Heart right ventricle (tissue), 16 donors: ENCODE measurements at regions of chr1 and their contacts with region 1.

Region 1: GRCh38 chr1:160098852-160099561 is 588 bp upstream of the IGSF8 start:
- DNase-seq: peak; percentile 98 to 99
- ATAC-seq: peak; percentile 89 to 94 (median 92)
- H3K4me3 ChIP-seq: peak overlapping the region in 9 of 10 donors; percentile 70 to 95 (median 81)
- H3K27ac ChIP-seq: peak overlapping the region; percentile 20 to 97 (median 92)
- H3K4me1 ChIP-seq: peaks cover 16 to 63% (median 36%) of the 10 kb centered on the region in 9 donors
- H3K27me3 ChIP-seq: no peaks in the 10 kb centered on the region
- CTCF ChIP-seq: no peak

Region 2: DNA sequence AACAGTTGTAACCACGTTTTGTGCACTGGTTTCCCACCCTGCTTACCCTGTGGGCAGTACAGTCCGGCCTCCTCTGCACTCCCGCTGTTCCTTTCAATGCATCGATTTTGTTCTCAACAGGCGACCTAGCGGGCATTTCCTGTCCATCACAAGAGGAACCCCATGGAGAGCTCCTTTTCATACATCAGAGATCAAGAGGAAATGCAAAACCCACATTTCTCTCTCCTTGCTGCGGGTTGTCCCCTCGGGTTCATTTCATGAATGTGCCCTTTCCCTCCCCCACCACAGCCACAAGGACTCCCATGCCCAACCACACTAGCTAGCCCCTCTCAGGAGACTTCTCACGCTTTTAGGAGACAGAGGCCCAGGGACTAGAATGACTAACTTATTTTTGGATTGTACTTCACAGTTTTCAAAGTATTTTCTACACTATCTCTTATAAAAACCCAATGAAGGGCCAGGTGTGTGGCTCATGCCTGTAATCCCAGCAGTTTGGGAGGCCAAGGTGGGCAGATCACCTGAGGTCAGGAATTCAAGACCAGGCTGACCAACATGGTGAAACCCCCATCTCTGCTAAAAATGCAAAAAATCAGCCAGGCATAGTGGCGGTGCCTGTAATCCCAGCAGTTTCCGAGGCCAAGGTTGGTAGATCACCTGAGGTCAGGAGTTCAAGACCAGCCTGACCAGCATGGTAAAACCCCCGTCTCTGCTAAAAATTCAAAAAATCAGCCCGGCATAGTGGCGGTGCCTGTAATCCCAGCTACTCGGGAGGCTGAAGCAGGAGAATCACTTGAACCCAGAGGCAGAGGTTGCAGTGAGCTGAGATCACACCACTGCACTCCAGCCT is 70.8 kb after region 1 on chr1:
- intact Hi-C with region 1: loop called in 1 of 10 experiments (anchors 5 kb)
- DNase-seq: no peak
- ATAC-seq: no peak
- H3K4me3 ChIP-seq: no peak overlapping the region
- H3K27ac ChIP-seq: no peak overlapping the region
- H3K4me1 ChIP-seq: peaks cover 0 to 7% (median 0%) of the 10 kb centered on the region in 9 donors
- H3K27me3 ChIP-seq: peaks cover 0 to 12% (median 0%) of the 10 kb centered on the region in 7 donors
- CTCF ChIP-seq: no peak

Region 3: GRCh38 chr1:160205242-160206035 is 106.4 kb after region 1 on chr1 and contains the start of gene PEA15:
- intact Hi-C with region 1: loop called in 2 of 10 experiments (anchors 5 to 10 kb)
- DNase-seq: peak; percentile 84 to 85
- ATAC-seq: peak; percentile 74 to 91 (median 86)
- H3K4me3 ChIP-seq: peak within 1 kb of the TSS; percentile 75 to 98 (median 90)
- H3K27ac ChIP-seq: peak within 1 kb of the TSS; percentile 73 to 98 (median 96)
- H3K4me1 ChIP-seq: peaks cover 41 to 61% (median 54%) of the 10 kb centered on the region in 9 donors
- H3K27me3 ChIP-seq: no peaks in the 10 kb centered on the region
- CTCF ChIP-seq: no peak
- total RNA-seq, gene PEA15: 213 to 451 (median 271) TPM

Region 4: GRCh38 chr1:160251687-160252526 is 152.9 kb after region 1 on chr1:
- intact Hi-C with region 1: loop called in 8 of 10 experiments (anchors 1 to 10 kb)
- DNase-seq: peak in 1 of 2 donors; percentile 78
- ATAC-seq: peak; percentile 88 to 97 (median 93)
- H3K4me3 ChIP-seq: no peak overlapping the region
- H3K27ac ChIP-seq: peak overlapping the region in 6 of 10 donors; percentile 15 to 51 (median 44)
- H3K4me1 ChIP-seq: peaks cover 0 to 54% (median 30%) of the 10 kb centered on the region in 9 donors
- H3K27me3 ChIP-seq: no peaks in the 10 kb centered on the region
- CTCF ChIP-seq: peak; percentile 42 to 84 (median 71)

Region 5: GRCh38 chr1:160376525-160377131 is 277.6 kb after region 1 on chr1:
- intact Hi-C with region 1: loop called in 6 of 10 experiments (anchors 2 to 10 kb)
- DNase-seq: peak in 1 of 2 donors; percentile 42
- ATAC-seq: peak; percentile 64 to 87 (median 82)
- H3K4me3 ChIP-seq: peak overlapping the region in 1 of 10 donors; percentile 13
- H3K27ac ChIP-seq: peak overlapping the region in 1 of 10 donors; percentile 56
- H3K4me1 ChIP-seq: peaks cover 5 to 28% (median 10%) of the 10 kb centered on the region in 9 donors
- H3K27me3 ChIP-seq: peaks cover 0 to 18% (median 0%) of the 10 kb centered on the region in 7 donors
- CTCF ChIP-seq: peak; percentile 72 to 92 (median 85)